Mammary epithelial cell (primary cell): ENCODE measurements at regions of chr21 and their contacts with region 1.

Region 1: DNA sequence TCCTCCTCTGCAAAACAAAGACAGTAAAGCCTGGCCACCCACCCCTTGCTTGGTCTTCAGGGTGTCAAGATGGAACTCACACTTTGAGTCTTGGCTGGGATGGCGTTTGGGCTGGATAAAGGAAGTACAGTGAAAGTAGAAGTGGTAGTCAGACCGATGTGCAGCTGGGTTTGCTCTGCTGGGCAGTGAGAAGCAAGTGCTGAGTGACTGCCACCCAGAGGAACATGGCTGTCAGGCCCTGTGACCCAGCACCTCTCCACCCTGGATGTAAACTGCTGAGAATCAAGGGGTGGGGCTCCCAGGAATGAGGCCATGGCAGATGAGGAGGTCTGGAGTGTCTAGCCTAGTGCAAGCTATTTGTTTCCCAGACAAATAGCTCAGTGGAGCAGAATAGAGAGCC is 51.2 kb downstream of the POFUT2 start:
- DNase-seq: no peak
- H3K4me3 ChIP-seq: no peak overlapping the region
- H3K27ac ChIP-seq: no peak overlapping the region
- H3K4me1 ChIP-seq: no peaks in the 10 kb centered on the region
- H3K27me3 ChIP-seq: peaks cover 16% of the 10 kb centered on the region
- CTCF ChIP-seq: peak in 1 of 2 donors; percentile 19

Region 2: DNA sequence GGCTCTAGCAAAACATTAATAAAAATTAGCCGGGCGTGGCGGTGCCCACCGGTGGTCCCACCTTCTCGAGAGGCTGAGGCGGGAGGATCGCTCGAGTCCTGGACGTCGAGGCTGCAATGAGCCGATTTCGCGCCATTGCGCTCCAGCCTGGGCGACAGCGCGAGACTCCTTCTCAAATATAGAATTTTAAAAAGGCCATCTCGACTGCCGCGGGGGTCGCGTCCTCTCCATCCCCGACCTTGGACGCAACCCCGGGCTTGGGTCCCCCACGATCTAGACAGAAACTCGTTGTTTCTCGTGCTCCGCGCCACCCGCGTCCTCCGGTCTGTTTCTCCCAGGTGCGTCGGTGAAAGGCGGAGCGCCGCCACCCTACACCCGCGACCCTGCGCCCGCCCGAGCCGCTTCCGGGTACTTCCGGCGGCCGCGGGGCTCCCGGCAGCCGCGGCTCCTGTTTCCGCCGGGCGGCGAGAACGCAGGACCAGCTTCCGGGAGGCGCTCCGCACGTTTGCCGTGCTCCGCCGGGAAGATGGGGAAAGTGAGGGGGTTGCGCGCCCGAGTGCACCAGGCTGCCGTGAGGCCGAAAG is 296.9 kb before region 1 on chr21 and contains the start of gene SLX9:
- CTCF ChIA-PET with region 1: no interaction called
- dilution Hi-C with region 1: no loop called
- in situ Hi-C with region 1: no loop called
- intact Hi-C with region 1: no loop called
- DNase-seq: peak; percentile 81
- H3K4me3 ChIP-seq: peak within 1 kb of the TSS; percentile 80 to 95 (median 87)
- H3K27ac ChIP-seq: peak within 1 kb of the TSS; percentile 59
- H3K4me1 ChIP-seq: peaks cover 25% of the 10 kb centered on the region
- H3K27me3 ChIP-seq: no peaks in the 10 kb centered on the region
- CTCF ChIP-seq: no peak
- total RNA-seq, gene SLX9: 17.3 to 53.2 TPM

Region 3: DNA sequence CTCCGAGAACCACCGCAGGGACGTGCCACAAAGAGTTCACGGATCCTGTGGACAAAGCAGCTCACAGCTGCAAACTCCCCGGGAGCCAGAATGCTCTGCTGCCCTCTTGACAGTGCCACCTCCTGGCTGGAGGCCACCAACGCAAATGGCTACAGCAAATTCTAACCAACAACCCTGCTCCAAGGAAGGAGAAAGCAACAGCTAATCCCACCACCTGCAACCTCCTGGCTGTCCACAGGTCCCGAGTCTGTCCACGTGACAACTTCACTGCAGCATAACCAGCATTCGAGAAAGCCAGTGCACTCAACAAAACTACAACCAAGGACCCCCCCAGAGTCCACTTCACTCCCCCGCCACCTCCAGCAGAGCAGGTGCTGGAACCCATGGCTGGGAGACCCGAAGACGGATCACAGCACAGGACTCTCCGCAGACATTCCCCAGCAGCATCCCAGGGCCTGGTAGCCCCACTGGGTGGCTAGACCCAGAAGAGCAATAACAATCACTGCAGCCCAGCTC is 33.9 kb after region 1 on chr21:
- CTCF ChIA-PET with region 1: no interaction called
- dilution Hi-C with region 1: loop called (anchors 5 kb)
- in situ Hi-C with region 1: no loop called
- intact Hi-C with region 1: no loop called
- DNase-seq: no peak
- H3K4me3 ChIP-seq: no peak overlapping the region
- H3K27ac ChIP-seq: no peak overlapping the region
- H3K4me1 ChIP-seq: no peaks in the 10 kb centered on the region
- H3K27me3 ChIP-seq: no peaks in the 10 kb centered on the region
- CTCF ChIP-seq: peak; percentile 24 to 32